ENCODE measurements at regions of chr11 and their contacts with region 1.

Region 1: DNA sequence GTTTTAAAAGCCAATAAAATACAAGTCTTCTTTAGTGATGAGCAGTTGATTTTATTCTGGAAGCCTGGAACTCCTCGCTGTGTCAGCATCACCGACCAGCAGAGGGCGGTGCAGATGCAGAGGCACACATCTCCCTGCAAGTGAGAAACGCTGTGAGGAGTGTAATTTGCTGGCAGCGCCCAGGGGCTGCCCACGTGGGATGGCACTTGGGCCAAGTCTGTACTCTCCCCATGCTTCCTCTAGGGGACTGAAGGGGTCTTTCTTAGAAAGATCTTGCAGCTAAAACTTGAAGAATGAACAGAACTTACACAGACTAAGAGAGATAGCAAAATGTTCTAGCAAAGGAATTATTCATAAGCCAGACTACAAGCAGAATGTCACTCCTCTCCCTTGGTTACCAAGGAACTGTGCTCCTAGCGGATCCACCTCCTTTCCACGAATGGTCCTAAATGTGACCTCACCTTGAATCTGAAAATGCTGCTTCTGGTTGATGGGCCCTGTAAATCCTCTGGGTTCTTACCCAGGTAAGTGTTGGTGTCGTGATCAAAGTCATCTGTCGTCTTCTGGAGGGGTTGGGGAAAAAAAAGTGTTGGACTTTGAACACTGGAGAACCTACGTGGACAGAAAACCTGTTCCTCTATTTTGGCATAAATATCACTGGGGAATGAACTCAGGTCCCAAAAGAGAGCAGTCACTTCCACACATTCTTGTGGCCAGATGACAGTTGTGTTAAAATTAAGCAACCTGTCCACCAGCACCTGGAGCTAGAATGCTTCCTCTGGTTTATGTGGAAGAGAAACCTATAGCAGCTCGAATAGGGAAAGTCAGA is 31.8 kb downstream of the CNTF start:
- DNase-seq: peak; percentile 90
- ATAC-seq: peak; percentile 87
- H3K4me3 Mint-ChIP-seq: no peak overlapping the region
- H3K27ac Mint-ChIP-seq: peak overlapping the region; percentile 62
- H3K4me1 Mint-ChIP-seq: peaks cover 20% of the 10 kb centered on the region
- H3K27me3 Mint-ChIP-seq: no peaks in the 10 kb centered on the region

Region 2: GRCh38 chr11:58640386-58641023 is 13.8 kb before region 1 on chr11:
- CTCF ChIA-PET with region 1: interaction called, 7 read pairs
- POLR2A ChIA-PET with region 1: no interaction called
- intact Hi-C with region 1: loop called in 1 of 2 experiments (anchors 2 kb)
- DNase-seq: no peak
- ATAC-seq: peak; percentile 79
- H3K4me3 Mint-ChIP-seq: no peak overlapping the region
- H3K27ac Mint-ChIP-seq: peak overlapping the region; percentile 52
- H3K4me1 Mint-ChIP-seq: peaks cover 26% of the 10 kb centered on the region
- H3K27me3 Mint-ChIP-seq: peaks cover 2% of the 10 kb centered on the region

Region 3: DNA sequence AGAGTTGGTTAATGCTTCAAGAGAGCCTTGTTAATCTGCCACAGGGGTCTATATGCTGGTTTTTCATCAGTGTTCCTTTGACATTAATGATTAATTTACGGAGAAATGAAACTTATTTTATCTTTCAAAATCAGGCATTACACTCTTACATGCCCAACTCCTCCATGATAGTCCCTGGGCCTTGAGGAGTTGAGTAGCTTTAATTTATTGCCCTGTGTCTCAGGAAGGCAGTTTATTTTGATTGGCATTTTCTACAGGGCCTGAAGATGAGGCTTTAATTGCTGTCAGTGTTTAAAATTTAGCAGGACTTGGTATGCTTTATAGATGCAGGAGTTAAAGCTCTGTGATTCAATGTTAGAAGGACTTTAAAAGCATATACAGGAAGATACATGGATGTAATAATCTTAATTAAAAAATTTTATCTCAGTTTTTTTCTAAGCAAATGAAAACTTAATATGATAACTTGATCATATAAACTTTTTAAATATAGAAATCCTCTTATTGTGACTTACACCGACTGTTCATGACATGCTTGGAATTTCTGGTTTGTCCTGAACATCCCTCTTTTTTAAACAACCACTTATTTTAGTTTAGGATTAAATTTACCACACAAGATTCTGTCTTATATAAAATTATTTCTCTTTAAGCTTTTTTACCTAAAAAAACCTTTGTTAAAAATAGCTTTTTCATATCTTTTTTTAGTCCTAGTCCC is 65.3 kb after region 1 on chr11:
- CTCF ChIA-PET with region 1: no interaction called
- POLR2A ChIA-PET with region 1: no interaction called
- intact Hi-C with region 1: loop called in 1 of 2 experiments (anchors 10 kb)
- DNase-seq: no peak
- ATAC-seq: no peak
- H3K4me3 Mint-ChIP-seq: no peak overlapping the region
- H3K27ac Mint-ChIP-seq: no peak overlapping the region
- H3K4me1 Mint-ChIP-seq: no peaks in the 10 kb centered on the region
- H3K27me3 Mint-ChIP-seq: no peaks in the 10 kb centered on the region

Region 4: GRCh38 chr11:58782066-58782465 is 127.8 kb after region 1 on chr11:
- CTCF ChIA-PET with region 1: no interaction called
- POLR2A ChIA-PET with region 1: no interaction called
- intact Hi-C with region 1: no loop called
- DNase-seq: no peak
- ATAC-seq: no peak
- H3K4me3 Mint-ChIP-seq: no peak overlapping the region
- H3K27ac Mint-ChIP-seq: no peak overlapping the region
- H3K4me1 Mint-ChIP-seq: no peaks in the 10 kb centered on the region
- H3K27me3 Mint-ChIP-seq: no peaks in the 10 kb centered on the region

Region 5: GRCh38 chr11:58900479-58901420 is 246.5 kb after region 1 on chr11:
- CTCF ChIA-PET with region 1: interaction called, 3 read pairs
- POLR2A ChIA-PET with region 1: no interaction called
- intact Hi-C with region 1: loop called (anchors 1 to 10 kb)
- DNase-seq: peak; percentile 79
- ATAC-seq: peak; percentile 73
- H3K4me3 Mint-ChIP-seq: no peak overlapping the region
- H3K27ac Mint-ChIP-seq: no peak overlapping the region
- H3K4me1 Mint-ChIP-seq: no peaks in the 10 kb centered on the region
- H3K27me3 Mint-ChIP-seq: peaks cover 42% of the 10 kb centered on the region

Region 6: GRCh38 chr11:59158206-59159068 is 504.1 kb after region 1 on chr11:
- CTCF ChIA-PET with region 1: interaction called, 12 read pairs
- POLR2A ChIA-PET with region 1: no interaction called
- intact Hi-C with region 1: no loop called
- DNase-seq: peak; percentile 74
- ATAC-seq: peak; percentile 98
- H3K4me3 Mint-ChIP-seq: no peak overlapping the region
- H3K27ac Mint-ChIP-seq: no peak overlapping the region
- H3K4me1 Mint-ChIP-seq: peaks cover 6% of the 10 kb centered on the region
- H3K27me3 Mint-ChIP-seq: peaks cover 6% of the 10 kb centered on the region

Measured in activated CD4-positive, alpha-beta T cell treated with anti-CD3 and anti-CD28 coated beads for 36 hours (primary cell).